ENCODE measurements at regions of chr14 and their contacts with region 1.

Region 1: DNA sequence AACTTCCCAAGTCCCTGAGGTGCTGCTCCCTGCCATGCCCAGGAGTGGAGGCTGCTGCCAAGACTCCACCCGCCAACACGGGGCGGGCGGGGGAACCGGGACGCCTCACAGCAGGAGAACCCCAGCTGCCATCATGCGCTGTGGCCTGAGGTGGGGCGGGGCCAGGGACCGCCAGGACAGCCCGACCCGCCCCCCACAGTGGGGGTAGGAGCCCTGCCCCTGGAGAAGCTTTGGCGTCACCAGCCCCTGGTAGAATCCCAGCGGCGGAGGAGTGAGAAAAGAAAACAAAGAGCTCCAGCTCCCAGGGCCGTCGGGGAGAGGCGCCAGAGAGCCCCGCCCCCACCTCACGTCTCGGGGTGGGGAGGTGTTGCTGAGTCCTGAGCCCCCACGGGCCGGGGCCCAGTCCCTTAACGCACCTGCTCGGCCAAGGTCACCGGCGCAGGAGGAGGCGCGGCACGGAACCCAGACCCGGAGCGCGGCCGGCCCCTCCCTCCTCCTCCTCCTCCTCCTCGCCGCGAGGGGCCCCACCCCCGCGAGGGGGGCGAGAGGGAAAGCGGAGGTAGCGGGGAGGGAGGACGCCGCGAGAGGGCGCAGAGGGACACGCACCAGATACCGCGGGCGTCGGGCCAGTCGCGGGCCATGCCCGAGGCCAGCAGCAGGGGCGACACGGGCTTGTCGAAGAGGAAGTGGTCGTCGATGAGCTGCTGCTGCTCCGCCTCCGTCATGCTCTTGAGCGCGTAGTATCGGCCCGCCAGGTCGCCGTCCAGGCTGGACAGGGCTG is 1.8 kb downstream of the CKB start:
- DNase-seq: peak; percentile 76 to 88 (median 82)
- ATAC-seq: peak; percentile 74
- H3K4me3 ChIP-seq: peak overlapping the region; percentile 60
- H3K27ac ChIP-seq: peak overlapping the region; percentile 83
- H3K4me1 ChIP-seq: peaks cover 41 to 85% of the 10 kb centered on the region in 2 experiments
- H3K27me3 ChIP-seq: no peaks in the 10 kb centered on the region
- CTCF ChIP-seq: peak; percentile 58 to 83 (median 71)
- EP300 ChIP-seq: no peak
- POLR2A ChIP-seq: no peak; the same call in 1 of the 2 replicates
- RAD21 ChIP-seq: peak in 1 of 2 experiments; percentile 58; a peak in 2 of 4 replicates

Region 2: DNA sequence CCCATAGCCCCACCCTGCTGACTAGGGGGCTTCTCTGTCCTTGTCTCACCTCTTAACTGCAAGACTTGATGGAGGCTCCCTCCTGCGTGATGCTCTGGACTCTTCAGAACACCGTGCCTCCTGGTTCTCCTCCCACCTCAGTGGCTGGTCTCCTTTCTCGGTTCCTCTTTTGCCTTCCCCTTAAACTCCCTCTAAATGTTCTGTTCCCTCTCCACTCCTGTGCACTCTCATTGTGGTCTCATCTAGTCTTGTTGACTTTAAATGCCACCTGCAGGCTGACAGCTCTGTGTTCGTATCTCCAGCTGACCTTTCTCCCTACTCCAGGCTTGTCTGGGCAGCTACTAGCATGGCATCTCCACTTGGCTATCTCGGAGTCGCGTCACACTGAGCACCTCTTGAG is 1528.1 kb before region 1 on chr14:
- CTCF ChIA-PET with region 1: no interaction called
- POLR2A ChIA-PET with region 1: no interaction called
- in situ Hi-C with region 1: no loop called
- intact Hi-C with region 1: no loop called
- DNase-seq: no peak
- ATAC-seq: no peak
- H3K4me3 ChIP-seq: no peak overlapping the region
- H3K27ac ChIP-seq: no peak overlapping the region
- H3K4me1 ChIP-seq: no peaks in the 10 kb centered on the region
- H3K27me3 ChIP-seq: no peaks in the 10 kb centered on the region
- CTCF ChIP-seq: no peak
- EP300 ChIP-seq: no peak
- POLR2A ChIP-seq: no peak
- RAD21 ChIP-seq: no peak

Region 3: GRCh38 chr14:103510311-103511021 is 10.4 kb before region 1 on chr14:
- CTCF ChIA-PET with region 1: no interaction called
- POLR2A ChIA-PET with region 1: interaction called, 12 read pairs
- in situ Hi-C with region 1: no loop called
- intact Hi-C with region 1: no loop called
- DNase-seq: no peak
- ATAC-seq: no peak
- H3K4me3 ChIP-seq: no peak overlapping the region
- H3K27ac ChIP-seq: no peak overlapping the region
- H3K4me1 ChIP-seq: peaks cover 0 to 16% of the 10 kb centered on the region in 2 experiments; a peak in 2 of 5 replicates
- H3K27me3 ChIP-seq: no peaks in the 10 kb centered on the region
- CTCF ChIP-seq: no peak
- EP300 ChIP-seq: no peak
- POLR2A ChIP-seq: no peak
- RAD21 ChIP-seq: no peak

Region 4: GRCh38 chr14:103562429-103563225 is 41.8 kb after region 1 on chr14 and contains the starts of genes BAG5 and COA8:
- CTCF ChIA-PET with region 1: no interaction called
- POLR2A ChIA-PET with region 1: no interaction called
- in situ Hi-C with region 1: no loop called
- intact Hi-C with region 1: loop called (anchors 5 kb)
- DNase-seq: peak; percentile 82 to 90 (median 85)
- ATAC-seq: peak; percentile 84
- H3K4me3 ChIP-seq: peak within 1 kb of the TSS; percentile 93
- H3K27ac ChIP-seq: peak within 1 kb of the TSS; percentile 96
- H3K4me1 ChIP-seq: peaks cover 3 to 5% of the 10 kb centered on the region in 2 experiments; a peak in 3 of 5 replicates
- H3K27me3 ChIP-seq: no peaks in the 10 kb centered on the region
- CTCF ChIP-seq: no peak
- EP300 ChIP-seq: no peak
- POLR2A ChIP-seq: peak; percentile 76
- RAD21 ChIP-seq: no peak
- polyA plus RNA-seq, gene BAG5: 9.1 to 13.2 TPM
- polyA plus RNA-seq, gene COA8: 5.0 to 11.8 TPM

Region 5: GRCh38 chr14:103594265-103594664 is 73.4 kb after region 1 on chr14:
- CTCF ChIA-PET with region 1: no interaction called
- POLR2A ChIA-PET with region 1: no interaction called
- in situ Hi-C with region 1: no loop called
- intact Hi-C with region 1: no loop called
- DNase-seq: no peak
- ATAC-seq: no peak
- H3K4me3 ChIP-seq: no peak overlapping the region
- H3K27ac ChIP-seq: no peak overlapping the region
- H3K4me1 ChIP-seq: no peaks in the 10 kb centered on the region; a peak in 1 of 5 replicates
- H3K27me3 ChIP-seq: no peaks in the 10 kb centered on the region
- CTCF ChIP-seq: no peak
- EP300 ChIP-seq: no peak
- POLR2A ChIP-seq: no peak
- RAD21 ChIP-seq: no peak